Transverse colon (tissue), 4 donors: ENCODE measurements at regions of chr10 and their contacts with region 1.

Region 1: DNA sequence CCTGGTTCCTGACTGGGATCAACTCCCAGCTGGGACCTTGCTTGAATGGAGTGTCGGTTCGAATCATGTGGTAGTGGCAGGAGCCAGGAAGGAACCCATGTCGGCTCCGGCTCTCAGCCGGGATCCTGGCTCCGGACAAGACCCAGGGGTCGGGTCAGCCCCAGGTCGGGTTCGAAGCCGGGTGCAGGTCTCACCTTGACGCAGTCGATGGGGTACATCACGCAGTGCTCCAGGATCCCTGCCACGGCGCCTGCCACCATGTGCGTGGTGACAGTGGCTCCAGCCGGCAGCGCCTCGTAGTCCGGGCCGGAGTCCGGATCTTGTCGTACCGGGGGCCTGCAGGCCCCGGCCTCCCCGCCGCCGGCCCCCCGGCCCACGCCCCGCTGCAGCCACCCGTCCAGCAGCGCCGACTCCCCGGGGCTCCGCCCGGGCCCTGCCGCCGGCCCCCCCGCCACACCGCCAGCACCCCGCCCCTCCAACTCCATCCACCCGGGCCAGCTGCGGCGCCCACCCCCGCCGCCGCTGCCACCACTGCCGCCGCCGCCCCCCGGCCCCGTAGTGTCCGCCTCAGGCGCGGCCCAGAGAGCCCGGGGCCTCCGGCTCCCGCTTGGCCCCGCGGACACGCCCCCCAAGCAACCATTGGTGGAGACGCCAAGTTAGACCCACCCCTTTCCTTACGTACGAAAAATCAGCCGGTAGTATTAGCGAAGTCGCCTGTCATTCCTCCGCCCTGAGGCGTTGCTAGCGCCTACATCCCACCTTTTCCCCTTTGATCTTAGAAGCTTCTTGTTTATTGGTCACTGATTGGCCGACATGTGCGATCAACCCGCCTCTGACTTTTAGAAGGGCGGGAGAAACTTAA is at the start of gene SLC25A28:
- DNase-seq: peak; percentile 95
- H3K4me3 ChIP-seq: peak within 1 kb of the TSS; percentile 75 to 95 (median 90)
- H3K27ac ChIP-seq: peak within 1 kb of the TSS; percentile 93 to 99 (median 98)
- H3K4me1 ChIP-seq: peaks cover 17 to 46% (median 38%) of the 10 kb centered on the region in 4 donors
- H3K27me3 ChIP-seq: no peaks in the 10 kb centered on the region
- CTCF ChIP-seq: no peak
- EP300 ChIP-seq: no peak
- POLR2A ChIP-seq: no peak
- total RNA-seq, gene SLC25A28: 22.1 to 36.2 (median 30.1) TPM

Region 2: GRCh38 chr10:99395750-99396445 is 224.2 kb before region 1 on chr10:
- in situ Hi-C with region 1: loop called in 1 of 4 experiments (anchors 10 kb)
- intact Hi-C with region 1: no loop called
- DNase-seq: no peak
- H3K4me3 ChIP-seq: no peak overlapping the region
- H3K27ac ChIP-seq: no peak overlapping the region
- H3K4me1 ChIP-seq: peaks cover 0 to 3% (median 1%) of the 10 kb centered on the region in 4 donors
- H3K27me3 ChIP-seq: no peaks in the 10 kb centered on the region
- CTCF ChIP-seq: no peak
- EP300 ChIP-seq: no peak
- POLR2A ChIP-seq: no peak

Region 3: GRCh38 chr10:99430451-99431189 is 189.5 kb before region 1 on chr10 and contains the start of gene GOT1:
- in situ Hi-C with region 1: loop called (anchors 10 kb)
- intact Hi-C with region 1: no loop called
- DNase-seq: peak; percentile 97
- H3K4me3 ChIP-seq: peak within 1 kb of the TSS; percentile 66 to 92 (median 78)
- H3K27ac ChIP-seq: peak within 1 kb of the TSS; percentile 91 to 99 (median 98)
- H3K4me1 ChIP-seq: peaks cover 12 to 58% (median 20%) of the 10 kb centered on the region in 4 donors
- H3K27me3 ChIP-seq: no peaks in the 10 kb centered on the region
- CTCF ChIP-seq: no peak
- EP300 ChIP-seq: no peak
- POLR2A ChIP-seq: peak; percentile 95
- total RNA-seq, gene GOT1: 54.5 to 94.3 (median 82.3) TPM

Region 4: GRCh38 chr10:99551158-99551557 is 68.9 kb before region 1 on chr10:
- in situ Hi-C with region 1: loop called in 1 of 4 experiments (anchors 10 kb)
- intact Hi-C with region 1: no loop called
- DNase-seq: peak; percentile 57
- H3K4me3 ChIP-seq: no peak overlapping the region
- H3K27ac ChIP-seq: peak overlapping the region; percentile 13 to 63 (median 36)
- H3K4me1 ChIP-seq: no peaks in the 10 kb centered on the region
- H3K27me3 ChIP-seq: peaks cover 48% of the 10 kb centered on the region
- CTCF ChIP-seq: no peak
- EP300 ChIP-seq: no peak
- POLR2A ChIP-seq: no peak

Region 5: DNA sequence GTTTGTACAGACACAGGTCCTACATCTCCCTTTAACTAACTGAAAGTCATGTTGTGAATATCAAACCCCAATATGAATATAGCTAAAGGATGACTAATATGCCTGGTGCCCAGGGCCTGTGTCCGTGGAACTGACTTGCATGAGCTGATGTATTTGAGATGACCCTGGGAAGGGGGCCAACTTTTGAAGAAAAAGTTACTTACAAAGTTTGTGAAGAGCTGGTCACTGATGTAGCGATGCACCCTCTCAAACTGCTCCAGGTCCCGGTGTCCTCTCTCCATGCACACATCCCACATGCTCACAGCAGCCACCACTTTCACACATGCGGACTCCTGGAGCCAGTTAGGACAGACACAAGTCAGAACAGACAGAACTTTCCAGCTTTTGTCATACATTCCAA is 268.5 kb after region 1 on chr10:
- in situ Hi-C with region 1: no loop called
- intact Hi-C with region 1: no loop called
- DNase-seq: no peak
- H3K4me3 ChIP-seq: no peak overlapping the region
- H3K27ac ChIP-seq: no peak overlapping the region
- H3K4me1 ChIP-seq: no peaks in the 10 kb centered on the region
- H3K27me3 ChIP-seq: no peaks in the 10 kb centered on the region
- CTCF ChIP-seq: no peak
- EP300 ChIP-seq: no peak
- POLR2A ChIP-seq: no peak